SK-N-SH (cell line): ENCODE measurements at regions of chr1 and their contacts with region 1.

Region 1: GRCh38 chr1:201895913-201896807 is 7.5 kb downstream of the SHISA4 start:
- DNase-seq: peak; percentile 92
- H3K4me3 ChIP-seq: peak overlapping the region; percentile 10 to 15; a peak in 2 of 4 replicates
- H3K27ac ChIP-seq: peak overlapping the region in 1 of 2 experiments; percentile 42; a peak in 1 of 4 replicates
- H3K4me1 ChIP-seq: peaks cover 6 to 15% of the 10 kb centered on the region in 2 experiments; a peak in 2 of 4 replicates
- H3K27me3 ChIP-seq: no peaks in the 10 kb centered on the region
- CTCF ChIP-seq: peak; percentile 97
- EP300 ChIP-seq: no peak
- RAD21 ChIP-seq: peak; percentile 95

Region 2: GRCh38 chr1:201678264-201679101 is 217.7 kb before region 1 on chr1:
- CTCF ChIA-PET with region 1: no interaction called
- POLR2A ChIA-PET with region 1: no interaction called
- DNase-seq: no peak
- H3K4me3 ChIP-seq: no peak overlapping the region
- H3K27ac ChIP-seq: no peak overlapping the region
- H3K4me1 ChIP-seq: peaks cover 23 to 28% of the 10 kb centered on the region in 2 experiments
- H3K27me3 ChIP-seq: no peaks in the 10 kb centered on the region
- CTCF ChIP-seq: no peak
- EP300 ChIP-seq: no peak
- RAD21 ChIP-seq: no peak

Region 3: GRCh38 chr1:201883786-201884185 is 12.4 kb before region 1 on chr1:
- CTCF ChIA-PET with region 1: interaction called, 222 read pairs
- POLR2A ChIA-PET with region 1: interaction called, 5 read pairs
- DNase-seq: no peak
- H3K4me3 ChIP-seq: no peak overlapping the region
- H3K27ac ChIP-seq: peak overlapping the region; percentile 31 to 59; a peak in 3 of 4 replicates
- H3K4me1 ChIP-seq: peaks cover 20 to 45% of the 10 kb centered on the region in 2 experiments; a peak in 3 of 4 replicates
- H3K27me3 ChIP-seq: no peaks in the 10 kb centered on the region
- CTCF ChIP-seq: no peak
- EP300 ChIP-seq: no peak
- RAD21 ChIP-seq: no peak

Region 4: DNA sequence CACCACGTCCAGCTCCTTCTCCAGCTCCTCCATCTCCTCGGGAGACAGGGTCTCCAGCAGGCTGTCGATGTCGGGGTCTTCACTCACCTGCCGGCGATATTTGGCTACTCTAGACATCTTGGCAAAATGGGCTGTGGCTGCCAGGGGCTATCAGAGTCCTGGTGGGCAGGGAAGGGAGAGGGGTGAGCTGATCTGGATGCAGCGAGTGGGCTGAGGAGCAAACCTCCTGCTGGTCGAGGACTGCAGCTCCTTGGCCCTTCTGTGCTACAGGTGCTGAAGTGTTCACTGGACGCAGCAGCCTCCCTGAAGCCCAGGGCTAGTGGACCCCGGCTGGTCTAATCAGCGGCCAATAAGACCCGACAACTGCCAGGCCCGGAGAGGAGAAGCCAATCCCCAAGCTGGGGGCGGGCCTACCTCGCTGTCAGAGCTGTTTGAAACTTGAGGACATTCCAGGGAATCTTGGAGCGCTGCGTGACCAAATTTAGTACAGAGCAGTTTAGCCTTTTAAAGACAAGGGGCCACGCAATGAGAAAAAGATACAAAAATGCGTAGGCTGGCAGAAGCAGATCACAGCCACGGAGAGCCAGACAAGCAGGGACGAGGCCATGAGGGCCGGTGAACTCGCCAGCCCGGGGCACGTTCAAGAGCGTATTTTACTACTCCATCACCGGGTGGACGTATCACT is 50.2 kb after region 1 on chr1 and contains the start of gene LMOD1:
- CTCF ChIA-PET with region 1: interaction called, 32 read pairs
- POLR2A ChIA-PET with region 1: no interaction called
- DNase-seq: peak; percentile 82
- H3K4me3 ChIP-seq: peak within 1 kb of the TSS; percentile 52 to 72
- H3K27ac ChIP-seq: peak within 1 kb of the TSS; percentile 29 to 68; a peak in 1 of 4 replicates
- H3K4me1 ChIP-seq: peaks cover 0 to 17% of the 10 kb centered on the region in 2 experiments; a peak in 2 of 4 replicates
- H3K27me3 ChIP-seq: no peaks in the 10 kb centered on the region
- CTCF ChIP-seq: no peak
- EP300 ChIP-seq: no peak
- RAD21 ChIP-seq: no peak
- polyA plus RNA-seq, gene LMOD1: 2.7 and 4.9 TPM in 2 replicates

Region 5: DNA sequence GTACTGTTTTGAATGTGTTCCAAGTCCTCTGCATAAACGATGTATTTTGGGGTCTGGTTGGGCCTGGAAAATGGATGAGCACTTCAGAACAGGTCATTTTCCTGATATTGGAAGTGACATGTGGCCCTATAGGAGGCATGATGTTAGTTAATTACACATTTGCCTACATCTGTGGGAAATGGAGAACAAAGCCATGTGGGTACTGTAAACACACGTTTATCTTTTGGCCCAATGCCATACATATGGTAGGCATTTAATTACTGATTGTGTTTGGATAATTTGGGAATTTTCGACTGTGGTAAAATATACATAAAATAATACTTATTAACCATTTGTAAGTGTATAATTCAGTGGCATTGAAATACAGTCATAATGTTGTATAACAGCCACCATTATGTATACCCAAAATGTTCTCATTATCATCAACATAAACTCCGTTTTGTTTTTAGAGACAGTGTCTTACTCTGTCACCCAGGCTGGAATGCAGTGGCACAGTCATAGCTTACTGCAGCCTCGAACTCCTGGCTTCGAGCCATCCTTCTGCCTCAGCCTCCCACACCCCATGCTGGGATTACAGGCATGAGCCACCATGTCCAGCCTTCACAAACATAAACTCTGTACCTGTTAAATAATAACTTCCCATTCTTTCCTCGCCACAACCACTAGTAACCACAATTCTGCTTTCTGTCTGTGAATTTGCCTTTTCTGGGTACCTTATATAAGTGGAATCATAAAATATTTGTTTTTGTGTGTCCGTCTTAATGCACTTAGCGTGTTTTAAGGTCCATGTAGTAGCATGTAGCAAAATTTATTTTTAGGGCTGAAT is 74.4 kb after region 1 on chr1:
- CTCF ChIA-PET with region 1: interaction called, 344 read pairs
- POLR2A ChIA-PET with region 1: interaction called, 8 read pairs
- DNase-seq: peak; percentile 62
- H3K4me3 ChIP-seq: no peak overlapping the region
- H3K27ac ChIP-seq: no peak overlapping the region
- H3K4me1 ChIP-seq: no peaks in the 10 kb centered on the region; a peak in 1 of 4 replicates
- H3K27me3 ChIP-seq: no peaks in the 10 kb centered on the region
- CTCF ChIP-seq: no peak
- EP300 ChIP-seq: peak in 1 of 2 experiments; percentile 84; a peak in 2 of 4 replicates
- RAD21 ChIP-seq: no peak

Region 6: GRCh38 chr1:202009326-202010179 is 113.4 kb after region 1 on chr1:
- CTCF ChIA-PET with region 1: interaction called, 10 read pairs
- POLR2A ChIA-PET with region 1: no interaction called
- DNase-seq: peak; percentile 90
- H3K4me3 ChIP-seq: no peak overlapping the region; a peak in 1 of 4 replicates
- H3K27ac ChIP-seq: no peak overlapping the region
- H3K4me1 ChIP-seq: peaks cover 0 to 3% of the 10 kb centered on the region in 2 experiments; a peak in 1 of 4 replicates
- H3K27me3 ChIP-seq: no peaks in the 10 kb centered on the region
- CTCF ChIP-seq: peak; percentile 96
- EP300 ChIP-seq: no peak
- RAD21 ChIP-seq: peak; percentile 90

Region 7: GRCh38 chr1:202076050-202076511 is 179.9 kb after region 1 on chr1:
- CTCF ChIA-PET with region 1: no interaction called
- POLR2A ChIA-PET with region 1: no interaction called
- DNase-seq: peak; percentile 73
- H3K4me3 ChIP-seq: no peak overlapping the region
- H3K27ac ChIP-seq: peak overlapping the region in 1 of 2 experiments; percentile 69; a peak in 2 of 4 replicates
- H3K4me1 ChIP-seq: peaks cover 0 to 22% of the 10 kb centered on the region in 2 experiments; a peak in 1 of 4 replicates
- H3K27me3 ChIP-seq: no peaks in the 10 kb centered on the region
- CTCF ChIP-seq: no peak
- EP300 ChIP-seq: peak in 1 of 2 experiments; percentile 86; a peak in 2 of 4 replicates
- RAD21 ChIP-seq: no peak; the same call in 1 of the 2 replicates